Aorta (tissue), 5 donors: ENCODE measurements at regions of chr6 and their contacts with region 1.

Region 1: GRCh38 chr6:89242574-89243330 is 25.6 kb upstream of the GABRR1 start:
- DNase-seq: no peak
- ATAC-seq: no peak
- H3K4me3 ChIP-seq: no peak overlapping the region
- H3K27ac ChIP-seq: no peak overlapping the region
- H3K4me1 ChIP-seq: no peaks in the 10 kb centered on the region
- H3K27me3 ChIP-seq: no peaks in the 10 kb centered on the region

Region 2: GRCh38 chr6:89122625-89123024 is 120.1 kb before region 1 on chr6:
- intact Hi-C with region 1: loop called (anchors 2 kb)
- DNase-seq: no peak
- ATAC-seq: no peak
- H3K4me3 ChIP-seq: no peak overlapping the region
- H3K27ac ChIP-seq: no peak overlapping the region
- H3K4me1 ChIP-seq: no peaks in the 10 kb centered on the region
- H3K27me3 ChIP-seq: no peaks in the 10 kb centered on the region